ENCODE measurements at regions of chr1 and their contacts with region 1.

Region 1: GRCh38 chr1:230066466-230067404 is at the start of gene GALNT2:
- DNase-seq: peak; percentile 91 to 94
- ATAC-seq: peak; percentile 81 to 89 (median 86)
- H3K4me3 ChIP-seq: peak within 1 kb of the TSS; percentile 95
- H3K27ac ChIP-seq: peak within 1 kb of the TSS; percentile 89
- H3K4me1 ChIP-seq: peaks cover 37% of the 10 kb centered on the region
- H3K27me3 ChIP-seq: no peaks in the 10 kb centered on the region
- CTCF ChIP-seq: no peak
- total RNA-seq, gene GALNT2: 49.4 to 88.7 (median 79.6) TPM

Region 2: DNA sequence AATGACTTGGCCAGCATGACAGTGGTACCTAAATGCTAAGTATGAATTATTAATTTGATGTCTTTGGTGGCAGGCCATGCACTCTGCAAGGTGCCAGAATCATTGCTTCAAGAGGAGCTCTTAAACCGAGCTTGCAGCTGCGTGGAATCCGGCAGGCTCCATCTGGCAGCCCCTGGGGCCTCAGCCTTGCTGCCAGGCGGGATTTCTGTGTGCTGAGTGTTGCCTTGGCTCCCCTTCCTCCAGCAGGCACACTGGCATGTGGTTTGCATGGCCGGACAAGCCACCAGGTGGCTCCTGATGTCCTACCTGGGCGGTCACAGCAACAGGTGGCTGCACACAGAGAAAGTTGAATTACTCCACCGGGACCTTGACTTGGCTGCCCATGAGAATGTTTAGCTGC is 285.3 kb before region 1 on chr1:
- intact Hi-C with region 1: no loop called
- DNase-seq: peak; percentile 15 to 68
- ATAC-seq: peak in 3 of 4 donors; percentile 64 to 94 (median 89)
- H3K4me3 ChIP-seq: no peak overlapping the region
- H3K27ac ChIP-seq: no peak overlapping the region
- H3K4me1 ChIP-seq: no peaks in the 10 kb centered on the region
- H3K27me3 ChIP-seq: no peaks in the 10 kb centered on the region
- CTCF ChIP-seq: peak; percentile 7

Region 3: DNA sequence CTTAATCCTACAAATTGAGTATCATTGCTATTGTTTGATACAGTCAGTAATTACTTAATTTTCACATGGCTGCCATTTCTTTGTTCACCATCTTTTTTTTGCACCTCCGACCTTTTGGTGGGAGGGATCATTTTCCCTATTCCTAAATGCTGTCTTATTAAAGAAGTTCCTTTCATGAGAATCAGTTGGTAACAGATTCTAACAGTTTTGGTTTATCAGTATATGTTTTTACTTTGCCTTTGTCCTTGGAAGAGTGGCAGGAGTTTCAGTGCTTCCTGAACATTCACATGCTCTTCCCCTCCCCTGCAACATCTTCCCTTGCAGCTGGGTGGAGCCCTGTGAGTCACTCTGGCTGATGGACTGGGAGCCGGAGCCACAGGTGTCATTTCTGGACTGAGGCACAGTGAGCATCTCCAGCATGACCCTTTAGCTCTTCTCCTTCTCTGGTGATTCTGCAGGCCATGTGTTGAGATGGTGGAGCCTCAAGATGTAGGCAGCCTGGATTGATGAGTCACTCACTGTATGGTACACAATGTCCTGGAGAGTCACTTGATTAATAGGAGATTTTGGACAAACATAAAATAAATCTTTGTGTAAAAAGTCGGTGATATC is 223.0 kb before region 1 on chr1:
- intact Hi-C with region 1: loop called (anchors 2 to 10 kb)
- DNase-seq: peak; percentile 61 to 85
- ATAC-seq: peak; percentile 96
- H3K4me3 ChIP-seq: no peak overlapping the region
- H3K27ac ChIP-seq: peak overlapping the region; percentile 89
- H3K4me1 ChIP-seq: peaks cover 20% of the 10 kb centered on the region
- H3K27me3 ChIP-seq: no peaks in the 10 kb centered on the region
- CTCF ChIP-seq: peak; percentile 54

Region 4: DNA sequence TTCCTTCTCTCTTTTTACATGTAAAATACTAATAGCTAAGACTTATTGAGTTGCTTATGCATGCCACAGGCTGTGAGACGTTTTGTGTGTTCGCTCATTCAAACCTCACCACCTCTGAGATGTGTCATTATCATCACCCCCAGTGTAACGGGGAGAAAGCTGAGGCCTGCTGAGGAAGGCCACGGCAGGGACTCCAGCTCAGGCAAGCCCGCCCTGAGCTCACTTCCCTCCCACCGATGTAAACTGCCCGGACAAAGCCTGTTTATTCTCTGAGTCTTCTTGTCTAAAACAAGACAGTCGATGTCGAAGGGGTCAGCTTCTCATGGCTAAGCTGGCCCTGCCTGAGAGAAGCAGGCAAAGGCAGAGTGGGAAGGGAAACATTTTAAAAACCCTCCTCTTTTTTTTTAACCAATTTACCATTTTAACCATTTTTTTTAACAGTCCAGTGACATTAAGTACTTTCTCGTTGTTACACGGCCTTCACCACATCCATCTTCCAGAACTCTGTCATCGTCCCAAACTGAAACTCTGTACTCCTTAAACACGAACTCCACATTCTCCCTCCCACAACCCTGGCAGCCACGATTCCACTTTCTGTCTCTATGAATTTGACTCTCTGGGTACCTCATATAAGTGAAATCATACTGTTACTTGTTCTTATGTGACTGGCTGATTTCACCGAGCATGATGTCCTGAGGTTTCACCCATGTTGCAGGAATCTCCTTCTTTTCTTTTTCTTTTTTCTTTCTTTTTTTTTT is 204.5 kb before region 1 on chr1:
- intact Hi-C with region 1: loop called in 1 of 2 experiments (anchors 5 kb)
- DNase-seq: no peak
- ATAC-seq: no peak
- H3K4me3 ChIP-seq: no peak overlapping the region
- H3K27ac ChIP-seq: peak overlapping the region; percentile 91
- H3K4me1 ChIP-seq: peaks cover 41% of the 10 kb centered on the region
- H3K27me3 ChIP-seq: no peaks in the 10 kb centered on the region
- CTCF ChIP-seq: no peak

Region 5: GRCh38 chr1:230104395-230105244 is 37.9 kb after region 1 on chr1:
- intact Hi-C with region 1: loop called in 1 of 2 experiments (anchors 2 kb)
- DNase-seq: peak; percentile 99
- ATAC-seq: peak; percentile 85 to 95 (median 92)
- H3K4me3 ChIP-seq: peak overlapping the region; percentile 23
- H3K27ac ChIP-seq: peak overlapping the region; percentile 85
- H3K4me1 ChIP-seq: peaks cover 64% of the 10 kb centered on the region
- H3K27me3 ChIP-seq: no peaks in the 10 kb centered on the region
- CTCF ChIP-seq: no peak

Region 6: DNA sequence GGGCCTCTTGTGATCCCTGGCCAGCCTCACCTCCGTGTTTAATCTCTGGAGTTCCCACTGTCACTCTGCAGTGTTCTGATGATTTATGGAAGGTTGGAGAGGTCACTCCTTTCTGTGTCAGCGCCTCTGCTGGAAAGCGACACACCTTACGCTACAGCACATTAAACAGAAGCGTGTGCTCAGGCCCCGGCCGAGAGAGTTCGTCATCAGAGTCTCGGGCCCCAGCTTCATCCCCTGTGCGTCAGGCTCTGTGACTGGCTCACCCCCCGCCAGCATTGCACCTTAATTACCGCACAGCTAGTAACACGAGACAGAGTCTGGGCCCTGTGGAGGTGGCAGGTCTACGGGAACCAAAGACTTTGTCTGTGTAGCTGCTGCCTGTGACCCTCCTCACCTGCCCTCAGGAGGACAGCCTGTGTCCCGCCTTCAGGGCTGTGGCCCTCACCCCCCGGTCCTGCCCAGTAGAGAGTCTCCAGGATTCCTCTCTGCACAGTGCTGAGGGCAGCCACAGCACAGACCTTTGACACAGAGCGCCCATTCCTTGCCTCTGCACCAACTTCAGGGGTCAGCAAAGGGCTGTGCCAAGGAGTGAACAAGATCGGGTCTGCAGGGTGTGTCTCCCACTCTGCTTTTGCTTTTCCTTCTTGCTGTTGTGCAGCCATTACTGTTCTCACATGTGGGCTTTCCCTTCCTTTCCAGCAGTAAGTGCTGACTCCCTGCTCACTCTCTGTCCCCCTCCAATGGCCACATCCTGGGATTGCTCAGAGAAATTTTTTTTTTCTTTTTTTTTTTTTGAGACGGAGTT is 201.8 kb after region 1 on chr1:
- intact Hi-C with region 1: loop called in 1 of 2 experiments (anchors 5 kb)
- DNase-seq: peak in 1 of 2 donors; percentile 72
- ATAC-seq: peak; percentile 49 to 88 (median 72)
- H3K4me3 ChIP-seq: no peak overlapping the region
- H3K27ac ChIP-seq: peak overlapping the region; percentile 42
- H3K4me1 ChIP-seq: peaks cover 21% of the 10 kb centered on the region
- H3K27me3 ChIP-seq: no peaks in the 10 kb centered on the region
- CTCF ChIP-seq: peak; percentile 43